Left cardiac atrium (tissue), 4 donors: ENCODE measurements at regions of chr6 and their contacts with region 1.

Region 1: GRCh38 chr6:132962936-132963868 is 148.8 kb downstream of the RPS12 start:
- DNase-seq: peak; percentile 75
- ATAC-seq: peak; percentile 79 to 83

Region 2: DNA sequence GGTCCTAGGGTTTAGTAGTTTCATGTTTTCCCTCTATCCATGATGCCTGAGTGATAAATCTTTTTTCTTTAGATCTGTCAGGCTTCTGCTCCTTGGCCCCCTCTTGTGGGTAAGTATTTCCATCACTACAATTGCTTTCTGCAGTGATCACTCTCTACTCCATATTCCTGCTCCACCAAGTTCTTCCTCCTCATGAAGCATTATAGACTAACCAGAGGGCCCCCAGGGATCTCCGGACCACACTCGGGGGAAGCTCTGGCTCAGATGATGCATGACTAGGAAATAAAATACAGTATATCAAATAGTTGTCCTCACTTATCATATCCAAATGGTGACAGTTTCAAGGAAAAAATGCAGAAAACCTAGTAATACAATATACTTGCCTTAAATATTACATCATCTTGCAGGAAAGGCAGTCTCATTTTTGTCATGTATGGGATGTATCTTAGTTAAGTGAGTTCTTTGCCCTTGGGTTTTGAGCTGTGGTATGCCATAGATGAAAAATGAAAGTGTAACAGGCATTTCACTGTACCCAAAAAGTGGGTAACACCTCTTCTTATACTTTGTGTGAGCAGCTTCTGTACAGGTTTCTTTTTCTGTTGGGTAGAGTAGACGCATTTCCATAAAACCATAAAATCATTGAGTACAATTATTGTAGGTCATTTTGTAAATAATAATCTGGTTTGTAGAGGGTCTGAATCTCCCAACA is 77.0 kb after region 1 on chr6:
- intact Hi-C with region 1: loop called in 1 of 2 experiments (anchors 10 kb)
- DNase-seq: no peak
- ATAC-seq: peak; percentile 33 to 34

Region 3: DNA sequence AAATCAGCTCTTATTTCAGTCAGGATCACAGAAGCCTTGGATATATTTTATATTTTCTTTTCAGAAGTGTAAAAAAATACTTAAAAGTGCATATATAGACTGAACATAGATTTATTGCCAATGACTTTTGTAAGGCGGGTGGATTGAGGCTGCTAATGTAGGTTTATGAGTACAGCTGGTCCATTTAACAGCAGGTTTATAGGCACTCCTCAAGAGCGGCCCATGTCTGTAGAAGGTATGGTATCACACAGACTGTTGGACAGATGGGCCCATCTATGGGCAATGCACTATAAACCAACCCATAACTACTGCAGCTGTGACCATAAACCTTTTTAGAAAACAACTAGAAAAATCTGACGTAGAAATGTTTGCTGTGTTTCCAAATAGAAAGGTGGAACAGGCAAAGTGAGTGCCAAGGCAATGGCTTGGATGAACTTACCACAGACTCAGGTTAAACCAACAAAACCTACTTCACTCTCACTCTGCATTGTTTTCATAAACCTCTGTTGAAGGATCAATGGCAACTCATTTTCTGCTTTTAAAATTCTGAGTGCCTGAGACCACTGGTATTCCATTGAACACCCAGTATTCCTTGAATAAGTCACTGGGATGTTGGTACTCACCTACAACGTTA is 107.3 kb after region 1 on chr6:
- intact Hi-C with region 1: no loop called
- DNase-seq: no peak
- ATAC-seq: no peak

Region 4: GRCh38 chr6:133184798-133185372 is 221.7 kb after region 1 on chr6:
- intact Hi-C with region 1: loop called in 1 of 2 experiments (anchors 10 kb)
- DNase-seq: no peak
- ATAC-seq: peak in 1 of 2 donors; percentile 12

Region 5: DNA sequence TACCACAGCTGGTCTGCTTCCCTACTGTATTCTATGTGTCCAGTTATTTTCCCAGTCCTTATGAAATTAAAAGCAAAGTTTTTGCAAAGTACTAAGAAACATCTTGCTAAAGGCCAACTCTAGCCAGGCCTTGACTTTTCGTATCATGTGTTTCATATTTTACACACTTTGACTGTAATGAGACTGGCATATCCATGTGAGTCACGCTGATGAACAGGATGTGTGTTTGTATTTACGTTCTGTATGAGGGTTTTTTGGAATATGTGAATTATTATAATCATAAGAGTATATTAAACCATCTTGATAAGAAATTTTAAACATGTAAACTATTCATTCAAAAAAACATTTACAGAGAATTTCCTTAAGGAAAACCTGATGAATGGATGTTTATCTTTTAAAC is 337.7 kb after region 1 on chr6:
- intact Hi-C with region 1: no loop called
- DNase-seq: no peak
- ATAC-seq: no peak

Region 6: DNA sequence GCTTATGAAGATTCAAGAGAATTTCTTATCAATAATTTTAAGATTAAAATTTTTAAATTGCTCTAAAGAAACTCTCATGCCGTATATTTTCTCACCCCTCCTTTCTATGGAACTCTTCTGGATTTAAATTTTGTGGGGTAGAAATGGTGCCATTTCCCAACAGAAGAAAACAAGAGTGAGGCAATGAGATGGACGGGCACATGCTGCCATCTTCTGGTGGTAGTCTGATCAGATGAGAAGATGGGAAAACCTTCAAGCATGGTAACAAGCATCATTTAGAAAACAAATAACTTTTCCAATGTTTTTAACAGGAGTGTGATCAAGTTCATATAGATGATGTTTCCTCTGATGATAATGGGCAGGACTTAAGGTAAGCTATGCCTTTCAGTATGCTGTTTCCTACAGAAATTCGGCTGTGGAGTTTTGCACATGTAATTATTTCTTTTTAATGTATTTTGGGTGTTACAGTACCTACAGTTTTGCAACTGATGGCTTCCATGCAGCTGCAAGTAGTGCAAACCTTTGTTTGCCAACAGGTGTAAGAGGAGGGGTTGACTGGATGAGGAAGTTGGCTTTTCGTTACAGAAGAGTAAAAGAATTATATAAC is 549.3 kb after region 1 on chr6:
- intact Hi-C with region 1: loop called in 1 of 2 experiments (anchors 5 kb)
- DNase-seq: peak; percentile 37
- ATAC-seq: peak in 1 of 2 donors; percentile 57